A673 (cell line): ENCODE measurements at regions of chr7 and their contacts with region 1.

Region 1: GRCh38 chr7:134927723-134928122 is 58.6 kb upstream of the AGBL3 start:
- DNase-seq: no peak
- H3K4me3 ChIP-seq: no peak overlapping the region
- H3K27ac ChIP-seq: no peak overlapping the region
- H3K4me1 ChIP-seq: no peaks in the 10 kb centered on the region
- H3K27me3 ChIP-seq: no peaks in the 10 kb centered on the region
- CTCF ChIP-seq: no peak

Region 2: DNA sequence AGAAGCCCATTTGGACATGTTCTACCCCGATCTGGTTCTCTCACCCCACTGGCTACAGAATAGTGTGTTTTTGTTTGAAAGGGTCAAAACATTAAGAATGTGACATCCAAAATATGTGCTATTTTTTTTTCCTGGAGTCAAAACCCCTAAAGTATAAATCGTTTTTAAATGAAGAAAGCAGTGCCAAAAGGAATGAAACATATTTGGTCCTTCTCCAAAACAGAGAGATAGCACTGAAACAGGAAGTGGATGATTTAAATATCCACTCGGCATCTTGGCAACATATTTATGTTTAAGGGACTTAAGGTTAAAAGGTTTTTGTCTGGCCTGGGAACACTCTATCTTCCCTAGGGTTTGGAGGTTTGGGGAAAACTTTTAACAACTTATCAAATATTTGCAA is 116.0 kb before region 1 on chr7:
- CTCF ChIA-PET with region 1: no interaction called
- POLR2A ChIA-PET with region 1: no interaction called
- intact Hi-C with region 1: no loop called
- DNase-seq: peak; percentile 37
- H3K4me3 ChIP-seq: no peak overlapping the region
- H3K27ac ChIP-seq: peak overlapping the region; percentile 42
- H3K4me1 ChIP-seq: peaks cover 49% of the 10 kb centered on the region
- H3K27me3 ChIP-seq: no peaks in the 10 kb centered on the region
- CTCF ChIP-seq: no peak

Region 3: GRCh38 chr7:134905375-134905774 is 22.3 kb before region 1 on chr7:
- CTCF ChIA-PET with region 1: interaction called, 24 read pairs
- POLR2A ChIA-PET with region 1: no interaction called
- intact Hi-C with region 1: no loop called
- DNase-seq: peak; percentile 77
- H3K4me3 ChIP-seq: no peak overlapping the region
- H3K27ac ChIP-seq: peak overlapping the region; percentile 34
- H3K4me1 ChIP-seq: peaks cover 24% of the 10 kb centered on the region
- H3K27me3 ChIP-seq: no peaks in the 10 kb centered on the region
- CTCF ChIP-seq: peak; percentile 50